IMR-90 (cell line): ENCODE measurements at regions of chr1 and their contacts with region 1.

Region 1: DNA sequence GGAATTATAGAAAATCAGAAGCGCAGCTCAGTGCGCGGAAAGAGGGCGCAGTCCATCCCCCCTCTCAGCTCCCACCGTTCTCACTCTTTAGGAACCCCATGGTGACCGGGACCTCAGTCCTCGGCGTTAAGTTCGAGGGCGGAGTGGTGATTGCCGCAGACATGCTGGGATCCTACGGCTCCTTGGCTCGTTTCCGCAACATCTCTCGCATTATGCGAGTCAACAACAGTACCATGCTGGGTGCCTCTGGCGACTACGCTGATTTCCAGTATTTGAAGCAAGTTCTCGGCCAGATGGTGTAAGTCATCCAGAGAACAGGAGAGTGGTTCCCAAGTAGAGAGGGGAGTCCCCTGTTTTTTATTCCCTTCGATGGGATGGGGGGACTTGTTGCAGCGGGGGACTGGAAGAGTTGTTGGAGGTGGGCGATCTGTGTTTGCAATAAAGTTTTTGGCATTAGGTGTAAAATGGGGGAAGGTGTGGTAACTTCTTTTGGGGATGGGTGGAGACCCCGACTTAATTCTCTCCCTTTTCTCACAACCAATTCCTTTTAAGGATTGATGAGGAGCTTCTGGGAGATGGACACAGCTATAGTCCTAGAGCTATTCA is 620 bp downstream of the PSMB4 start:
- DNase-seq: peak; percentile 19
- ATAC-seq: peak; percentile 33
- H3K4me3 ChIP-seq: peak overlapping the region; percentile 67
- H3K27ac ChIP-seq: peak overlapping the region; percentile 84
- H3K4me1 ChIP-seq: peaks cover 3% of the 10 kb centered on the region; the same call in 1 of the 2 replicates
- H3K27me3 ChIP-seq: no peaks in the 10 kb centered on the region
- CTCF ChIP-seq: no peak
- POLR2A ChIP-seq: no peak
- RAD21 ChIP-seq: no peak

Region 2: DNA sequence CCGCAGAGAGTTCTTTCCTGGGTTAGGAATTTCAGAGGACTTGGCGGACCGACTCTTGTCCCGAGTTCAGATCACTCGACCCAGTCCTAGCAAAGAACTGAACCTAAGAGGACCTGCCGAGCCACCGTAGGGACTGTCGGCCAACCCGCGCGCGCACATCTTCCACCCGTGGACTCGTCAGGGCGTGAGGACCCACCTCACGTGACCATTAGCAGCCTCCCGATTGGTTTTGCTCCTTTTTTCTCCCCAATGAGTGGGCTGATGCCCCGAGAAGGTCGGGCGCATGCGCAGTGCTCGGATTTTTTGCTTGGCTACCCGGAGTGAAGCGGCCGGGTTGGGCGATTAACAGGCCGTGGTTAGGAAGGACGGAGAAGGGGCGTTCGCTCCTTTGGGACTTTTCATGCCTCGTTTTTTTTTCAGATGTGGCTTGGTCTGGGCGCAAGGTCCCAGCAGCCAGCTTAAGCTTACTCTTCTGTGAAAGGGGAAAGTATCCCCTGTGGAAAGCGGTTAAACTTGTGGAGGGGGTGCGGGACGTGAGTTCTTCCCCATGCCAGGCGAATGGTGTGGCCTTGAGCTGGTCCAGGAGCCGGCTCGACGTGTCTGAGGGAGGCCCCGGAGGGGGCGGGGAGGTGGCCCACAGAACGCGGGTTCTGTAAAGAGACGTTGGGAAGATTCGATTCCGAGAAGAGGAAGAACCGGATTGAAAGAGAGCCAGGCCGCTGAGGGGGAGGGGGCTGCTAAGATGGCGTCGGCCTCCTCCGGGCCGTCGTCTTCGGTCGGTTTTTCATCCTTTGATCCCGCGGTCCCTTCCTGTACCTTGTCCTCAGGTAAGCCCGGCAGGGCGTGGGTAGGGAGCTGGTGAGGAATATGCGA is 201.5 kb before region 1 on chr1 and contains the start of gene PIP5K1A:
- CTCF ChIA-PET with region 1: no interaction called
- POLR2A ChIA-PET with region 1: no interaction called
- dilution Hi-C with region 1: no loop called
- in situ Hi-C with region 1: loop called (anchors 10 kb)
- intact Hi-C with region 1: no loop called
- DNase-seq: peak; percentile 97
- ATAC-seq: peak; percentile 86
- H3K4me3 ChIP-seq: peak within 1 kb of the TSS; percentile 98
- H3K27ac ChIP-seq: peak within 1 kb of the TSS; percentile 96
- H3K4me1 ChIP-seq: peaks cover 5% of the 10 kb centered on the region; the same call in 1 of the 2 replicates
- H3K27me3 ChIP-seq: no peaks in the 10 kb centered on the region
- CTCF ChIP-seq: no peak
- POLR2A ChIP-seq: peak; percentile 88
- RAD21 ChIP-seq: no peak
- total RNA-seq, gene PIP5K1A: 52.5 and 59.1 TPM in 2 replicates

Region 3: GRCh38 chr1:151281969-151282882 is 117.8 kb before region 1 on chr1 and contains the start of gene ZNF687:
- CTCF ChIA-PET with region 1: interaction called, 3 read pairs
- POLR2A ChIA-PET with region 1: interaction called, 10 read pairs
- dilution Hi-C with region 1: no loop called
- in situ Hi-C with region 1: no loop called
- intact Hi-C with region 1: no loop called
- DNase-seq: peak; percentile 100
- ATAC-seq: peak; percentile 90
- H3K4me3 ChIP-seq: peak within 1 kb of the TSS; percentile 59
- H3K27ac ChIP-seq: peak within 1 kb of the TSS; percentile 84
- H3K4me1 ChIP-seq: peaks cover 5% of the 10 kb centered on the region; the same call in 1 of the 2 replicates
- H3K27me3 ChIP-seq: no peaks in the 10 kb centered on the region
- CTCF ChIP-seq: no peak
- POLR2A ChIP-seq: peak; percentile 64
- RAD21 ChIP-seq: no peak
- total RNA-seq, gene ZNF687: 5.7 and 6.4 TPM in 2 replicates

Region 4: GRCh38 chr1:151311589-151312331 is 88.2 kb before region 1 on chr1:
- CTCF ChIA-PET with region 1: no interaction called
- POLR2A ChIA-PET with region 1: interaction called, 3 read pairs
- dilution Hi-C with region 1: no loop called
- in situ Hi-C with region 1: loop called (anchors 10 kb)
- intact Hi-C with region 1: no loop called
- DNase-seq: peak; percentile 100
- ATAC-seq: peak; percentile 89
- H3K4me3 ChIP-seq: no peak overlapping the region
- H3K27ac ChIP-seq: peak overlapping the region; percentile 68
- H3K4me1 ChIP-seq: peaks cover 39% of the 10 kb centered on the region
- H3K27me3 ChIP-seq: no peaks in the 10 kb centered on the region
- CTCF ChIP-seq: no peak
- POLR2A ChIP-seq: 0 out of 2 replicates have a peak, but pooled peaks have one; percentile 44
- RAD21 ChIP-seq: no peak; the same call in 1 of the 2 replicates

Region 5: GRCh38 chr1:151346769-151347522 is 53.0 kb before region 1 on chr1 and contains the start of gene RFX5:
- CTCF ChIA-PET with region 1: no interaction called
- POLR2A ChIA-PET with region 1: no interaction called
- dilution Hi-C with region 1: no loop called
- in situ Hi-C with region 1: no loop called
- intact Hi-C with region 1: loop called (anchors 1 kb)
- DNase-seq: peak; percentile 98
- ATAC-seq: peak; percentile 98
- H3K4me3 ChIP-seq: peak within 1 kb of the TSS; percentile 67
- H3K27ac ChIP-seq: peak within 1 kb of the TSS; percentile 66
- H3K4me1 ChIP-seq: peaks cover 7% of the 10 kb centered on the region
- H3K27me3 ChIP-seq: no peaks in the 10 kb centered on the region
- CTCF ChIP-seq: no peak
- POLR2A ChIP-seq: peak; percentile 73
- RAD21 ChIP-seq: no peak
- total RNA-seq, gene RFX5: 37.8 and 44.4 TPM in 2 replicates

Region 6: DNA sequence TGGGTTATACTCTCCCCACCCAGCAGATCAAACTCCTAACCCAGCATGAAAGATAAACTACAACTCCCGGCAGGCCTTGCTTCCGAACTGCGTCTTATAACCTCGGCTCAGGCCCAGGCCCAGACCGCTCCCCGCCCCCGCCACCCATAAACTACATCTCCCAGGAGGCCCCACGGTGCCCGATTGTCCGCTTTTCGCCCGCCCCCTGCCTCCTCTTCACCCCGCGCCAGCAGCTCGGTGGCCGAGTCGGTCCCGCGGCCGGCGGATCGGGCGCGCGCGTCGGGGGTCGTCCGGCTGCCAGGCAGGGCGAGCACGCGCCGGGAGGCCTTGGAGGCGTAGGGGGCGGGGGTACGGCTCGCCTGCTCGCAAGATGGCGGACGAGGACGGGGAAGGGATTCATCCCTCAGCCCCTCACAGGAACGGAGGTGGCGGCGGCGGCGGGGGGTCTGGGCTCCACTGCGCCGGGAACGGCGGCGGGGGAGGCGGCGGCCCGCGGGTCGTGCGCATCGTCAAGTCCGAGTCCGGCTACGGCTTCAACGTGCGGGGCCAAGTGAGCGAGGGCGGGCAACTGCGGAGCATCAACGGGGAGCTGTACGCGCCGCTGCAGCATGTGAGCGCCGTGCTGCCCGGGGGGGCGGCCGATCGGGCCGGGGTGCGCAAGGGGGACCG is 212.0 kb after region 1 on chr1 and contains the start of gene SNX27:
- CTCF ChIA-PET with region 1: no interaction called
- POLR2A ChIA-PET with region 1: no interaction called
- dilution Hi-C with region 1: no loop called
- in situ Hi-C with region 1: no loop called
- intact Hi-C with region 1: no loop called
- DNase-seq: peak; percentile 90
- ATAC-seq: peak; percentile 88
- H3K4me3 ChIP-seq: peak within 1 kb of the TSS; percentile 84
- H3K27ac ChIP-seq: peak within 1 kb of the TSS; percentile 89
- H3K4me1 ChIP-seq: peaks cover 10% of the 10 kb centered on the region
- H3K27me3 ChIP-seq: no peaks in the 10 kb centered on the region
- CTCF ChIP-seq: no peak
- POLR2A ChIP-seq: no peak
- RAD21 ChIP-seq: no peak
- total RNA-seq, gene SNX27: 25.6 and 34.4 TPM in 2 replicates